GM18951 (cell line): ENCODE measurements at regions of chr7 and their contacts with region 1.

Region 1: GRCh38 chr7:95686109-95686508 is 86.2 kb upstream of the DYNC1I1 start:
- POLR2A ChIP-seq: no peak

Region 2: DNA sequence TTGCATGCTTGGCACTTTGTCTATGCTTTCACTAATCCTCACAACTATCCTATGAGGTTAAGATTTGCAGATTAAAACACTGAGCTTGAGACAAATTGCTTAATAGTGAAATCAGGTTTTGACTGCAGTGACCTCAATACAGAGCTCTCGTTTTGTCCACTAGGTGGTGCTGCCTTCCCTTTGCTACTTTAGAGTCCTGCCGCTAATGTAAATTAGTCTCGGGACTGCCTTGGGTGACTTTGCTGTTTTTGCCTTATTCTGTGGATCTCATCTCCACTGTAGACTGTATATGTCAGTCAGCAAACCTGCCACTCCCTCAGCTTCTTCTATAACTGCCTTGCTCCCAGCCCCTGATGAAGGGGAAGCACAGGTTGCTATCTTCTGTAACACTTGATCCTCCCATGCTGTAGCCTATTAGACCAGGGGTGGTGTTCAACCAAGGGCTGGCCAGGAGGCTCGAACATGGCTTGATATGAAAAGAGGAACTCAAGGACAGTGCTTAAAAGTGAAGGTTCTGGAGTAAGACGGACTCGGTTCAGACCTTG is 174.3 kb before region 1 on chr7:
- in situ Hi-C with region 1: loop called (anchors 10 kb)
- POLR2A ChIP-seq: no peak